Activated B cell treated with CpG ODN at 0.5 μM for 24 hours (primary cell): ENCODE measurements at regions of chr17 and their contacts with region 1.

Region 1: DNA sequence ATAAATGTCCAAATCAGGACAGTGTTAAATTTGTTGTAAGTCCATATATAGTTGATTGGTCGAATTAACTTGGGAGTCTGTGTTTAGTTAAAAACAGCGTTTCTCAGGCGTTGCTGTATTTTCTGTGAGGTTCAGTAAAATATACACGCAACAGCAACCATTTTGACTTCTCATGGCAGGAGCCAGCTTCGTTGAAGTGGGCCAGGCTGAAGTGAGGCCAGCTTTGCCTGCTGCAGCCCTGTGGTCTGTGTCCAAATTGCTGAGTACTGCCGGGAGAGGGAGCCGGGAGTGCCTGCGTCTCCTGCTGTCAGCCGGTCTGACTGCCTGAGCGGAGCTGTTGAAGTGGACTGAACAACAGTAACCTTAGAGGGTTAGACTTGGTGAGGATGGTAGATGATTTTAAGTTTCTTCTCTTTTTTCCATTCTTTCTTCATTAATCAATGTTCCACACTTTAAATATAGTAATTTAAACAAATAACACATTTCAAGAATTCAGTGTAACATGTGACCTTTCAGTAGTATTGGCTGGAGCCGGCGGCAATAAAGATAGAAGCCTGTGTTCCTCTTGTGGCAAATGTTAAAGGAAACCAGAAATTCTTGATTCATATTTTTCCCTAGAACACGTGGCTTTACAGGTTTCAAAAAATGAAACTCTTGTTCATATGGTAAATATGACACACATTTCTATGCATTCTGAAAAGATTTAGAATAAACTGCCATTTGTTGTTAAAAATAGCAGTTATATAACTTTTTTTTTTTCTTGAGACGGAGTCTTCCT is 37.0 kb upstream of the ZNF750 start:
- DNase-seq: no peak
- ATAC-seq: no peak
- H3K4me3 Mint-ChIP-seq: no peak overlapping the region
- H3K27ac Mint-ChIP-seq: no peak overlapping the region
- H3K4me1 Mint-ChIP-seq: peaks cover 29% of the 10 kb centered on the region
- H3K27me3 Mint-ChIP-seq: no peaks in the 10 kb centered on the region
- CTCF ChIP-seq: no peak

Region 2: DNA sequence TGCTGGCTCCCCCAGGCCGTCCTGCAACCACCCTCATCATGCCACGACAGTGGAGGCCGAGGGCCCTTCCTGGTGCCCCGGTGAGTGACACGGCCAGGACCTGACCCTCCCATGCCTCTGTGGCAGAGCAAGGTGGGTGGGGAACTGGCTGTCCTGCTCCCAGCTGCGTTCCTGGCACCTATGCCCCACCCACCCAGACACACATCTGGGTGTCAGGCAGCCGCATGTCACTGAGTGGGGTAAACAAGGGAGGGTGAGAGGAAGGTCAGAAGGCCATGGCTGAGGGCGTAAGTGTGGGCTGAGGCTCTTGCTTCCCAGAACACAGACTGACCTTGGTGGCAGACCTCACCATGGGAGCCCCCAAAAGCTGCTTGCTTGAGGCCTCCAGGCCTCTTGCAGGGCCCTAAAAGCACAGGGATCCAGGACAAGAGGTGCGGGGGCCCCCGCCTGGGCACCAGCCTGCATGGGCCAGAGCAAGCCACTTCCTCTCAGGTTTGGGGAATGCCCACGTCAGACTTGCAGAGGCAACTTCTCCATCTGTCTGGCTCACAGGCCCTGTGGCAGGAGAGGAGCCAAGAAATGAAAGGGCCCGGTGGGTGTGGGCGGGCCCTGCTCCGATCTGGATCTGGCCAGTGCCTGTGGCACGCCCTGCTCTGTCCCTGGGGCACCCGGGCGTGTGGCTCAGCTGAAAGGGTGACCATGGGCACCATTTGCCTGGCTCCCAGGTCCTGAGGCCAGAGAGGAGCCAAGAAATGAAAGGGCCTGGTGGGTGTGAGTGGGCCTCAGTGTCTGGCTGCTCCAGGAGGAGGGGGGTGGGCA is 660.3 kb before region 1 on chr17:
- CTCF ChIA-PET with region 1: no interaction called
- POLR2A ChIA-PET with region 1: no interaction called
- intact Hi-C with region 1: no loop called
- DNase-seq: peak; percentile 60
- ATAC-seq: peak; percentile 74
- H3K4me3 Mint-ChIP-seq: peak overlapping the region; percentile 57
- H3K27ac Mint-ChIP-seq: peak overlapping the region; percentile 84
- H3K4me1 Mint-ChIP-seq: peaks cover 39% of the 10 kb centered on the region
- H3K27me3 Mint-ChIP-seq: no peaks in the 10 kb centered on the region
- CTCF ChIP-seq: no peak

Region 3: GRCh38 chr17:82775001-82775823 is 101.6 kb before region 1 on chr17:
- CTCF ChIA-PET with region 1: no interaction called
- POLR2A ChIA-PET with region 1: no interaction called
- intact Hi-C with region 1: no loop called
- DNase-seq: peak; percentile 42
- ATAC-seq: peak; percentile 89
- H3K4me3 Mint-ChIP-seq: peak overlapping the region; percentile 35
- H3K27ac Mint-ChIP-seq: peak overlapping the region; percentile 50
- H3K4me1 Mint-ChIP-seq: peaks cover 29% of the 10 kb centered on the region
- H3K27me3 Mint-ChIP-seq: no peaks in the 10 kb centered on the region
- CTCF ChIP-seq: no peak

Region 4: DNA sequence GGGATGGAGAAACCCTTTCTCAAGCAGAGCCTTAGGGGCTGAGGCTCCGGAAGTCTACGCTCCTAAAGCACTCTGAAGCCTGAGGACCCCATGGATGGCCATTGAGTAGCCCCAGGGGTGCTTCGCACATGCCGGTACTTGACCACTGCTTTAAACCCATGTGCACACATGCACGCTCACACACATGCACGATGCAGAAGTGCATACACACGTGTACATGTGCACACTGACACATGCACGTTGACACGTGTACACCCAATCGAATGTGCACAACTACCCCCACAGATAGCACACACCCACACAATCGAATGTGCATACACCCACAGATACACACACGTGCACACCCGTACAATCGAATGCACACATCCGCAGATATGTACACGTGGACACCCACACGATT is 49.4 kb before region 1 on chr17:
- CTCF ChIA-PET with region 1: no interaction called
- POLR2A ChIA-PET with region 1: no interaction called
- intact Hi-C with region 1: no loop called
- DNase-seq: no peak
- ATAC-seq: no peak
- H3K4me3 Mint-ChIP-seq: no peak overlapping the region
- H3K27ac Mint-ChIP-seq: no peak overlapping the region
- H3K4me1 Mint-ChIP-seq: no peaks in the 10 kb centered on the region
- H3K27me3 Mint-ChIP-seq: no peaks in the 10 kb centered on the region
- CTCF ChIP-seq: no peak

Region 5: GRCh38 chr17:82962864-82963684 is 86.3 kb after region 1 on chr17:
- CTCF ChIA-PET with region 1: no interaction called
- POLR2A ChIA-PET with region 1: no interaction called
- intact Hi-C with region 1: loop called (anchors 10 kb)
- DNase-seq: peak; percentile 15
- ATAC-seq: peak; percentile 74
- H3K4me3 Mint-ChIP-seq: no peak overlapping the region
- H3K27ac Mint-ChIP-seq: no peak overlapping the region
- H3K4me1 Mint-ChIP-seq: peaks cover 23% of the 10 kb centered on the region
- H3K27me3 Mint-ChIP-seq: no peaks in the 10 kb centered on the region
- CTCF ChIP-seq: no peak